ENCODE measurements at regions of chr4 and their contacts with region 1.

Region 1: DNA sequence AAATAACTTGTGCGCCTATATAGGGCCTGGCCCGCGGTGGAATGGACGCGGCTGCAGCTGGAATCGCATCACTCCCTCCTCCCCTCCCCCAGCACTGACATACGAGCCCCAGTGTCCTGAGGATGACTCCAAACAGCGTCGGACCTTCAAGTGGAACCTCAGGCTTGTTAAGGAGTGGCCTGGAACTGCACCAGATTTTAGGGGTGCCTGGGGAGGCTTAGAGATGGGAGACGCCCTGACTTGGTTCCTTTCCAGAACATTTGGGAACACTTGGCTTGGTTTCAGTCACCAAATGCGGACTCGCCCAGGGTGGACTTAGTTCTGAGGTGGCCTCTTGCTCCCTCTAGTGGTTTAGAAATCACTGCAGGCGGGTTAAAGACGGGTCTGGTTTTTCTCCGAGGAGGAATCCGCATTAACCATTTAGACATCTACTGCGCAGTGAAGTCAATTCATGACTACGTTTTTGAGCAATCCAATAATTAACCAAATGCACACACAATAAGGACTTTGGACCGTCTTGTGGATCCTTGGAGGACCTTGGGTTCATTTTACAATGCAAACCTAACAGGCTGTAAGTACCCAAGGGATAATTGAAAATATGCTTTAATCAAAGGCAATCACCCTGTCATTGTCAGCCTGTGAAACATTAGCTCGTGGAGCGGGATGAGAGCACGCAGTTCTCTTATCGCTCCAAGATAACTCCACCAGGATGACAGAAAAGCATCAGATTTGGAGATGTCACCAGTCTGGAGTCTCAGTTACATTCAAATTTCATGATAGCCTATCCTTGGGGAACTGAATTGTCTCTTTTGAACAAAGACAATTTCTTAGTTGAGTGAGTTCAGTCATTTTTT is 11.2 kb upstream of the PDGFRA start:
- DNase-seq: peak; percentile 80
- ATAC-seq: peak; percentile 95
- H3K4me3 ChIP-seq: peak overlapping the region; percentile 41 to 74
- H3K27ac ChIP-seq: no peak overlapping the region
- H3K4me1 ChIP-seq: no peaks in the 10 kb centered on the region
- H3K27me3 ChIP-seq: no peaks in the 10 kb centered on the region; the same call in 1 of the 2 replicates
- CTCF ChIP-seq: peak; percentile 82

Region 2: GRCh38 chr4:53908661-53909078 is 309.2 kb before region 1 on chr4:
- CTCF ChIA-PET with region 1: no interaction called
- POLR2A ChIA-PET with region 1: no interaction called
- in situ Hi-C with region 1: no loop called
- intact Hi-C with region 1: loop called (anchors 2 kb)
- DNase-seq: peak; percentile 61
- ATAC-seq: peak; percentile 86
- H3K4me3 ChIP-seq: no peak overlapping the region
- H3K27ac ChIP-seq: no peak overlapping the region
- H3K4me1 ChIP-seq: no peaks in the 10 kb centered on the region
- H3K27me3 ChIP-seq: peaks cover 3% of the 10 kb centered on the region
- CTCF ChIP-seq: peak; percentile 73

Region 3: GRCh38 chr4:53929955-53930798 is 287.7 kb before region 1 on chr4:
- CTCF ChIA-PET with region 1: interaction called, 3 read pairs
- POLR2A ChIA-PET with region 1: no interaction called
- in situ Hi-C with region 1: no loop called
- intact Hi-C with region 1: loop called (anchors 1 kb)
- DNase-seq: peak; percentile 72
- ATAC-seq: peak; percentile 96
- H3K4me3 ChIP-seq: no peak overlapping the region
- H3K27ac ChIP-seq: no peak overlapping the region
- H3K4me1 ChIP-seq: no peaks in the 10 kb centered on the region
- H3K27me3 ChIP-seq: no peaks in the 10 kb centered on the region
- CTCF ChIP-seq: peak; percentile 75

Region 4: GRCh38 chr4:54041100-54041499 is 176.8 kb before region 1 on chr4:
- CTCF ChIA-PET with region 1: no interaction called
- POLR2A ChIA-PET with region 1: no interaction called
- in situ Hi-C with region 1: no loop called
- intact Hi-C with region 1: no loop called
- DNase-seq: no peak
- ATAC-seq: no peak
- H3K4me3 ChIP-seq: no peak overlapping the region
- H3K27ac ChIP-seq: no peak overlapping the region
- H3K4me1 ChIP-seq: no peaks in the 10 kb centered on the region
- H3K27me3 ChIP-seq: no peaks in the 10 kb centered on the region
- CTCF ChIP-seq: no peak